MCF 10A (cell line): ENCODE measurements at regions of chrX and their contacts with region 1.

Region 1: DNA sequence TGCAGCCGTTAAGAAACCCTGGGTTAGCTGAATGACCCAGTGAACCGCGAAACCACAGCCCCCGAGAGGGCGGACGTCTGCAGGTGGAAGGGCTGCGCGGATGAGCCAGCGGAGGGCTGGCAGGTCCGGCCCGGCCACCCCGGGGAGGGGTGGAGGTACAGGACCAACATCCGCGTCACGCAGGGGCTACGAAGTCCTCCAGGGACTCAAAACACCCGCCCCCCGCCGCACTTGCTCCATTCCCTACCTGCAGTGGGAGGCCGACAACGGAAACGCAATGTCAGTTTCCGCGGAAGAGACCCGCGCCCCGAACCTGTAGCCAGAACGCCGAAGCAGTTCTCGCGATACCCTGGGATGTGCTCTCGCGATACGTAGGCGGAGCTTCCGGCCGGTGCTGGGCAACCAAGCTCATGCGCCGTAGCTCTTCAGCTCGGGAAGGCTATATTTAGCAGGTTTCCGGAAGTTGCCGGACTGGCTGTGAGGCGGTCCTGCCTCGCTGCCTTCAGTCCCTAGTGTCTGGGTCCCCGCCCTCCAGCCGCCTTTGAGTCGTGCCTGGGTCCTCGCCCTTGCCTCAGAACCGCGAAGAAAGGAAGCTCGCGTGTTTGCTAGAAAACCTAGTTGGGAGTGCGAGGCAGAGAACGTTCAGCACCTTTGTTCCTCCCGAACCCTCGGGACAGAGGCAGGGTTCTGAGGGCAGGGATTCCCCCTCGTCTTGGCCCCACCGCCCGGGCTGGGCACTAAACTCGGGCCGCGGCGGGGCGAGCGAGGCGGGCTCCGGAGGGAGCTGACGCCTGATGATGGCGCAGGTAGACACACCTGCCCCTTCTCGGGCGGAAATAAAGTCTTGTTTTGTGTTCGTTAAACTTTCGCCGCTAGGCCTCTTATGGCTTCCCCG is at the starts of genes OFD1 and TRAPPC2:
- DNase-seq: peak; percentile 97
- H3K4me3 Mint-ChIP-seq: peak within 1 kb of the TSS; percentile 96
- H3K27ac Mint-ChIP-seq: peak within 1 kb of the TSS; percentile 98
- H3K4me1 Mint-ChIP-seq: peaks cover 17% of the 10 kb centered on the region
- H3K27me3 Mint-ChIP-seq: no peaks in the 10 kb centered on the region
- CTCF ChIP-seq: no peak
- total RNA-seq, gene OFD1: 44.3 and 44.8 TPM in 2 replicates
- total RNA-seq, gene TRAPPC2: 16.5 and 21.7 TPM in 2 replicates

Region 2: GRCh38 chrX:12065251-12065650 is 1669.3 kb before region 1 on chrX:
- CTCF ChIA-PET with region 1: no interaction called
- POLR2A ChIA-PET with region 1: no interaction called
- intact Hi-C with region 1: no loop called
- DNase-seq: peak; percentile 63
- H3K4me3 Mint-ChIP-seq: no peak overlapping the region
- H3K27ac Mint-ChIP-seq: no peak overlapping the region
- H3K4me1 Mint-ChIP-seq: no peaks in the 10 kb centered on the region
- H3K27me3 Mint-ChIP-seq: peaks cover 12% of the 10 kb centered on the region
- CTCF ChIP-seq: no peak

Region 3: GRCh38 chrX:13506574-13506973 is 228.0 kb before region 1 on chrX:
- CTCF ChIA-PET with region 1: interaction called, 12 read pairs
- POLR2A ChIA-PET with region 1: interaction called, 3 read pairs
- intact Hi-C with region 1: no loop called
- DNase-seq: peak; percentile 65
- H3K4me3 Mint-ChIP-seq: no peak overlapping the region
- H3K27ac Mint-ChIP-seq: no peak overlapping the region
- H3K4me1 Mint-ChIP-seq: no peaks in the 10 kb centered on the region
- H3K27me3 Mint-ChIP-seq: peaks cover 45% of the 10 kb centered on the region
- CTCF ChIP-seq: peak; percentile 81

Region 4: GRCh38 chrX:13638826-13639225 is 95.7 kb before region 1 on chrX:
- CTCF ChIA-PET with region 1: no interaction called
- POLR2A ChIA-PET with region 1: no interaction called
- intact Hi-C with region 1: no loop called
- DNase-seq: no peak
- H3K4me3 Mint-ChIP-seq: no peak overlapping the region
- H3K27ac Mint-ChIP-seq: no peak overlapping the region
- H3K4me1 Mint-ChIP-seq: no peaks in the 10 kb centered on the region
- H3K27me3 Mint-ChIP-seq: peaks cover 58% of the 10 kb centered on the region
- CTCF ChIP-seq: no peak

Region 5: DNA sequence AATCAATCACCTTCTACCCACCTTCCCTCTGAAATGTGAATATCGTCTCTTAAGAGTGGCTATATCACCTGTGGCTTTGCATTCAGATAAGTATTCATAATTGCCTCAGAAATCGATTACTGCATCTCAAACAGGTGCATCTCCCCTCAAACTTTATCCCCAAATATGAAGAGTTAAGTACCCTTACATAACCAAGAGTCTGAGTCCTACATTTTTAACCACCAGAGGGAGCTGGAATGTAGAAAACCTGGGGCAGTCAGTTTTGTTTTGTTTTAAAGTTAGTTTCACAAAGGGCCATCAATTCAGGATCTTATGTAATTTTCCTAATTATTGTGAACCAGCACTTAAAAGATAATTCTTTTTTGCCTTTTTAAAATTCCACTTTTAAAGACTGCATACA is 75.9 kb before region 1 on chrX:
- CTCF ChIA-PET with region 1: interaction called, 5 read pairs
- POLR2A ChIA-PET with region 1: interaction called, 38 read pairs
- intact Hi-C with region 1: loop called (anchors 1 kb)
- DNase-seq: peak; percentile 79
- H3K4me3 Mint-ChIP-seq: no peak overlapping the region
- H3K27ac Mint-ChIP-seq: peak overlapping the region; percentile 23
- H3K4me1 Mint-ChIP-seq: peaks cover 10% of the 10 kb centered on the region
- H3K27me3 Mint-ChIP-seq: peaks cover 12% of the 10 kb centered on the region
- CTCF ChIP-seq: peak; percentile 66

Region 6: DNA sequence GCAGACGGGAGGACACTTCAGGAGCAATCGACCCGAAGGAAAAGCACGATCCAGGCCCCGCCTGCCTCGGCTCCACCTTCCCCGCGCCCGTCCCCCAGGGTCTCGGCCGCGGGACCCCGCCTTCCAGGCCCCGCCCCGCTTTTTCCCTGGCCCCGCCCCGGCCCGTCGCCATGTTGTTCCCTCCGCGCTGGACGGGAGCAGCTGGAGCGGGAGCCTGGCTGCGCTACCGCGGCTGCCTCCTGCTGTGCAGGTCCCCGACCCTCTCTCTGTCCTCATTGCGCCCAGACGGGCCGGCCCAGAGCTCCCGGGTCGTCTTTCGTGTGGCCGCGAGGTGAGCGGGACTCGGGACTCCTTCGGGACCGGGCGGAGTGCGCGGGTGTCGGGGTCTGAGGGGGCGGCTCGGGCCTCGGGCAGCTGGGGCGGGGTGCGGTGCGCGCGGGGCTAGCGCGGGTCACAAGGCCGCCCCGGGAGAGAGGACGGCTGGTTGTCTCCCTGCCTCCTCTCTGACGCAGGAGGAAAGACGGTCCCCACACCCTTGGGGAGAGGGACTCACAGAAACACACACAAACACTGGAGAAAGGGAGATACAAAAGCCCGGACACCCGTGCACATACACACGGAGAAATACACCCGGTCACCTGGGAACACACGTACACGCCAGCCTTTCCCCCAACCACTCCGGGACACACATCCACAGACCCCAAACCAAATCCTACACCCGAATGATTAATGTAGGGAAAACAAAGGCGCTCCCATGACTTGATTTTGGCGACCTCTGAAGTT is 45.4 kb before region 1 on chrX and contains the start of gene RAB9A:
- CTCF ChIA-PET with region 1: interaction called, 5 read pairs
- POLR2A ChIA-PET with region 1: interaction called, 213 read pairs
- intact Hi-C with region 1: no loop called
- DNase-seq: peak; percentile 86
- H3K4me3 Mint-ChIP-seq: peak within 1 kb of the TSS; percentile 84
- H3K27ac Mint-ChIP-seq: peak within 1 kb of the TSS; percentile 77
- H3K4me1 Mint-ChIP-seq: peaks cover 37% of the 10 kb centered on the region
- H3K27me3 Mint-ChIP-seq: peaks cover 8% of the 10 kb centered on the region
- CTCF ChIP-seq: no peak
- total RNA-seq, gene RAB9A: 28.0 and 32.3 TPM in 2 replicates

Region 7: DNA sequence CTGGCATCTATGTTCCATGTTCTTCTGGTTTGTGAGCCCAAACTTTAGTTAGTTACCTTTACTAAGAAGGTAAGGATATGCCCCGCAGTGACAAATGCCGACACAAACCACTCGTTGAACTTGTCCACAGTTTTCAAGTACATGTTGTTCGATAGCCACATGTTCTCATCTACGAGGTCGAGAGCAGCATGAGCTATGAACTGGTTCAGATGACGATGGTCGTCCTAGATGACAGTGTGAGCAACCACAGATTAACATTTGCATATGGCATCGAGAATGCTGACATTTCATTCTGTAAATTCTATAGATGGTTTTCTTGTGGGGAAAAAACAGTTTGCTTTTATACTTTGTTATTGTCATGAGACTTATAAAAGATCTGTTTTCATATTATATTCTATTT is 18.1 kb before region 1 on chrX:
- CTCF ChIA-PET with region 1: interaction called, 4 read pairs
- POLR2A ChIA-PET with region 1: interaction called, 20 read pairs
- intact Hi-C with region 1: no loop called
- DNase-seq: no peak
- H3K4me3 Mint-ChIP-seq: no peak overlapping the region
- H3K27ac Mint-ChIP-seq: no peak overlapping the region
- H3K4me1 Mint-ChIP-seq: no peaks in the 10 kb centered on the region
- H3K27me3 Mint-ChIP-seq: no peaks in the 10 kb centered on the region
- CTCF ChIP-seq: no peak

Region 8: GRCh38 chrX:13837290-13837745 is 102.8 kb after region 1 on chrX:
- CTCF ChIA-PET with region 1: no interaction called
- POLR2A ChIA-PET with region 1: interaction called, 12 read pairs
- intact Hi-C with region 1: no loop called
- DNase-seq: no peak
- H3K4me3 Mint-ChIP-seq: no peak overlapping the region
- H3K27ac Mint-ChIP-seq: peak overlapping the region; percentile 29
- H3K4me1 Mint-ChIP-seq: peaks cover 7% of the 10 kb centered on the region
- H3K27me3 Mint-ChIP-seq: peaks cover 26% of the 10 kb centered on the region
- CTCF ChIP-seq: no peak